Lower leg skin (tissue), 4 donors: ENCODE measurements at regions of chr6 and their contacts with region 1.

Region 1: DNA sequence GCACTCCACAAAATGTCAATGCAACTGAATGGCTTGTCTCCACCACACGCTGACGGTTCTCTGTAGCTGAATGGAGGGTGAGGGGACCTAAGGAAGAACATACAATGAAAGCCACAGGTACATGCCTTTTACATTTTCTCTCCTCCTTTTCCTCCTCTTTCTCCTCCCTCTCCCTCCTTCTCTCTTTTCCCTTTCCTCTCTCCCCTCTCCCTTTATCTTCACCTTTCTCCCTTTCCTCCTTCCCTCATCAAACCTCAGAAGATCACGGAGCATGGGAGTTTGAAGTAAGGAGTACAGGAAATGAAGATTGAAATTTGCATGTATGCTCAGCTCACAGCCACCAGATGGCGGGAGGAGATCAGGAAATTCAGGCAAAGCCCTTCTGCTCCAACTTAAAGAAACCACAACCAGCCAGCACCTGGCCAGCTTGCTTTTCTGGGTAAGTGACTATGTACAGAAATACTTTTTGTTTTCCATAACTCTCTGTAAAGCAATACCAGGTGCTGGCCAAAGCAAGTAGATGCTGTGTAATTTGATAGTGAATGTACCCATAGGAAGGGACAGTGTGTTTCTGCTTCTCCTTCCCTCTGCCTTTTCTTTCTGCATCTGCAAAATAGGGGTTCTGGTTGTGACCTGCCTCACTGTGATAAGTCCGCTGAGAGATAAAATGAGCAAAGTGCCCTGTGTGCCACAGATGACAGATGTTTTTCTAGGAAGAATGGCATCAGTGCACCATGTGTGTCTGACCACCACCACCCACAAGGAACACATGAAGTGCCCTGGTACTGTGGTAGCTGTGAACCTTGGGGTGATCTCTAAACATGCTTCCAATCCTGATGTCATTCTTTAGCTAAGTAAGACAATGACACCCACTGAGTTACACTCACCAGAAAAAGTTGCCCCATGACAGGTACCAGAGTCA is 18.6 kb upstream of the FOXO3 start:
- DNase-seq: peak; percentile 73 to 90
- H3K4me3 ChIP-seq: no peak overlapping the region
- CTCF ChIP-seq: peak in 1 of 3 donors; percentile 94
- POLR2A ChIP-seq: no peak

Region 2: GRCh38 chr6:108473197-108473596 is 68.9 kb before region 1 on chr6:
- intact Hi-C with region 1: no loop called
- DNase-seq: no peak
- H3K4me3 ChIP-seq: no peak overlapping the region
- CTCF ChIP-seq: no peak
- POLR2A ChIP-seq: no peak

Region 3: DNA sequence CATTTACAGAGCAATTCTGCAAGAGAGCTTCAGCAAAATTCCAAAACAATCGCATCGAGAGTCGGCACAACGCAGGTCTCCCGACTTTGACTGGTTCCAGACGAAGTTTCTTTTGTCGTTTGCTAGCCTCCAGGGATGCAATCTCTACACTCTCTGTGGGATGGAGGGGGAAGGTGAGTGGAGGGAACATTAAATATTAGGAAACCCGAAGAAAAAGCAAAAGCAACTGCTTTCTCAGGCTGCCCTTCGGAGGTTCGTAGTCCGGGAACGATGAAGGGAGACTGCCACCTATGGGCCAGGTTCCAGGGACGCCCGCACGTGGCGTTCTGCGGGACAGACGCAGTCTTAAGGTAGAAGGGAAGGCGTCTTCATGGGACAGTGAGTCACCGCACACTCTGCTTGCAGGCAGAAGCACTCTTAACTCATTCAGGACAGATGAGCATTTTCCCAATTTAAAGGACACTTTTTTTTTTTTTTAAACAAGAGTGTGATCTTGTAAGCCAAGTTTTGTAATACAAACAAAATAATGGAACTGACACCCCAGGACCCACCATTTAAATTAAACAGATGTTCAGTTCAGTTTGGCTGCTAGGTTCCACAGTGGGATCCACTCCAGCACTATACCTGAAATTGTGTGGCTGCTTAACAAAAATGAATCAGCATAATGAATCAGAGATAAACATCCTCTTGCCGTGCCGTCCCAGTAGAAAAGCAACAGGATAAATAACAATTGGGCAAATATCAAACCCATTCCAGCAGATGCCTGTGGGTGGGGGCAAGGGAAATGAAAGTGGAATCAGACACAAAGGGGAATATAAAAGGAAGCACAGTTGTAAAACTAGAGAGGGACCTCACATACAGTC is 240.3 kb after region 1 on chr6:
- intact Hi-C with region 1: loop called (anchors 10 kb)
- DNase-seq: peak; percentile 79 to 95
- H3K4me3 ChIP-seq: peak overlapping the region; percentile 13
- CTCF ChIP-seq: no peak
- POLR2A ChIP-seq: no peak

Region 4: DNA sequence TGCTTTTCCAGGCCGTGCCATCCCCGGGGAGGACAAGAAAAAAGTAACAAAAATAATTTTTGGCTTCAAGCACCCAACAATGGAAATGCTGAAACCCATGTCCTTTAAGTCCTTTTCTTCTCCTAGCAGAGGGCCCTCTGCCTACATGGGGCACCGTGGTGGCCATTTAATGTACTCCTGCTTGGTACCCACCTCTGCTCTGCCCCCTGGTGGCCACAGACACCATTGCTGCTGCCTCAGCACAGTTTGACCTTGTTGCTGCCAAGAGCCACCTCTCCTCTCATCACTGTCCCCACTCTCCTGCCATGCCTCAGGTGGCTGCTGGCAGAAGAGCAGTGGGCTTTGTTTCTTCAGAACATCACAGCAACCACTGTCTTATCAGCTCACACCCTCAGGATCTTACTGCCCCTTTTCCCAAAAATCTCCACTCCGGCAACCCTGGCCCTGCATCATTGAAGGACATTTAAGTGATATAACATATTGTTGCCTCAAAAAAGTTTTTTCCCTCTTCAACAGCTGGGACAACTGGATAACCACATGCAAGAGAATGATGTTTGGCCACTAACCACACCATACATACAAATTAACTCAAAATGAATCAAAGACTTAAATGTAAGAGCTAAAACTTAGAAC is 293.2 kb after region 1 on chr6:
- intact Hi-C with region 1: loop called (anchors 5 kb)
- DNase-seq: peak; percentile 90 to 98
- H3K4me3 ChIP-seq: no peak overlapping the region
- CTCF ChIP-seq: peak in 2 of 3 donors; percentile 19 to 89
- POLR2A ChIP-seq: no peak

Region 5: DNA sequence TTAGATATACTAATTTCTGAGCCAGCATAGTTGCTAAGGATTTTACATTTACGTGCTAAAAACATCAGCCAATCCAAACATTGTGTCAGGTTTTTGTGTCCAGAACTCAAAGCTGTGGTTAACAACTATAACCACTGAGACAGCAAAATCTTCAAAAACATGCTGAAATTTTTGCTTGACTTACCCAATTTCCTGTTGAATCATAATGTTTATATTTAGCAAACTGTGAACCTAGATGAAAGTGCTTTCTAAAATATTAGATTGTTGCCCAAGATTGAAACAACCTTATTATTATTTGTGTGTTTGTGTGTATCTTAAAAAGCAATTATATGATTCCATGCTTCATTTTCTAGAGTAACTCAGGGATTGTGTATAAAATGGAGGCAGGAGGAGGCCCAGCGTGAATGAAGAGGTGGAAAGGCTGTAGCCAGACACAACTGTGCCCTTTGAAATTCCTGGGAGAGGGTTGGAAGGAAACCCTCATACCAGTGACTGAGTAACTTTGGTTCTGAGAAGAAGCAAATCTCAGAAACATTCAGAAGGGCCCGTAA is 354.1 kb after region 1 on chr6:
- intact Hi-C with region 1: loop called (anchors 5 kb)
- DNase-seq: no peak
- H3K4me3 ChIP-seq: no peak overlapping the region
- CTCF ChIP-seq: no peak
- POLR2A ChIP-seq: no peak

Region 6: DNA sequence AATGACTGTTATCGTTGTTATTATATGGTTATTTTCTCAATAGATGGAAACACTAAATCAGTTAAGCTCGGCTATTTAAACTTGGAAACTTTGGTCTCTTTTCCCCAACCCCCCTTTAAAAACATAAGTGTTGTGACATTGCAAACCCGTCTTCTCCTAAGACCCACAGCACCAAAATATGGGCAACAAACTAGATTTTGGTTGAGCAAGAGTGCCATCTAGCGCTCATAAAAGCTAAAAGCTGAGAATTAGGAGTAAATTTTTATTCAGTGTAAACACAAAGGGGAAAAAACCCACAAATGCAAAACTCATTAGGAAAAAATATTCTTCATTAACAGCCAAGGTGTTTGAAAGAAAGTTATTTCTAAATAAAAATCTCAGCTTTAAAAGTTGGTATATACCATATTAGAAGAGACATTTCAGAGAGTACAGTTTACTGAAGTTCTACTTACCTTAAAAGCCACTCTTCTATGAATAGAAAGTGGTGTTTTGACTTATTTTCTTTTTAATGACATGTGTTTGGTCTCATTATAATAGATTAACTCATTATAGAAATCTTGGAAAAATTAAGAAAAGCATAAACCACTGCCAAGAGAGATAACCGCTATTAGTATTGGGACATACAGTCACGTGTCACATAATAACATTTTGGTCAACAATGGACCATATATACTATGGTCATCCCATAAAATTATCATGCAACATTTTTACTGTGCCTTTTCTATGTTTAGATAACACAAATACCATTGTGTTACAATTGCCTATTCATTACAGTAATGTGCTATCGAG is 531.4 kb after region 1 on chr6:
- intact Hi-C with region 1: loop called (anchors 10 kb)
- DNase-seq: peak in 1 of 2 donors; percentile 44
- H3K4me3 ChIP-seq: no peak overlapping the region
- CTCF ChIP-seq: no peak
- POLR2A ChIP-seq: no peak